ENCODE measurements at regions of chr2 and their contacts with region 1.

Region 1: DNA sequence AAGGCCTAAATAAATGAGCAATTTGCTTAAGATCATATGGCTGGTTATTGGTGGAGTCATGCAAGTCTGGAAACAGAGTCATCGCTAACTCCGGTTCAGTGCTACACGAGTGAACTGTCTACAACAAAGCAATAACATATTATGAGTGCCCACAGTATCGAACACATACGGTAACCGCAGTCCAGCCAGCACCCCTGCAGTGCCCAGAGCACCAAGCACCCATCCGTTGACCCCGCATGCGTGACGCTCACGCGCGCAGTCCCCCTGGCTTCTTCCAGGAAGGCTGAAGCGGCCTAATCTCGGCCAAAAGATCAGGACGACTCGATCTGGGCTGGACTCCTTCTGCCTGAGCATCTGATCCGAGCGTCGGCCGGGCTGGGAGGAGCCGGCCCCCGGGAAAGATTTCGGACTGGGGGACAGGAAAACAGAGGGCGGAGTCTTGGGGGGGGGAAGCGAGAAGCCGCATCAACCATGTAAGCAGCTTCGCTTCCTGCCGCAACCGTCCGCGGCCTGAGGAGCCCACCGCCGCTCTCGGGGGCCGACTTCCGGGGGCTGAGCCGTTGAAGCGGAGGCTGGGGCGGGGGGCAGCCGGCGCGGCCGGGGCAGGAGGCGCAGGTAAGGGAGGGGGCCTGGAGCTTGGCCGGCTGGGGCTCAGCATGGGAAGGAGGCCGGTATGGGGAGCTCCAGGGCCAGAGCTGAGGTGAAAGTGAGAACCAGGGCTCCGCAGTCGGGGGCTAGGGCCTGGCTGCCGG is at the start of gene PIKFYVE:
- DNase-seq: peak; percentile 94
- ATAC-seq: peak; percentile 84
- H3K4me3 Mint-ChIP-seq: peak within 1 kb of the TSS; percentile 84
- H3K27ac Mint-ChIP-seq: peak within 1 kb of the TSS; percentile 94
- H3K4me1 Mint-ChIP-seq: peaks cover 33% of the 10 kb centered on the region
- H3K27me3 Mint-ChIP-seq: no peaks in the 10 kb centered on the region
- total RNA-seq, gene PIKFYVE: 19.3 to 21.5 TPM

Region 2: GRCh38 chr2:206765242-206766056 is 1500.5 kb before region 1 on chr2 and contains the starts of genes FASTKD2 and MDH1B:
- CTCF ChIA-PET with region 1: no interaction called
- POLR2A ChIA-PET with region 1: no interaction called
- intact Hi-C with region 1: loop called in 1 of 2 experiments (anchors 5 kb)
- DNase-seq: peak; percentile 93
- ATAC-seq: peak; percentile 87
- H3K4me3 Mint-ChIP-seq: peak within 1 kb of the TSS; percentile 93
- H3K27ac Mint-ChIP-seq: peak within 1 kb of the TSS; percentile 98
- H3K4me1 Mint-ChIP-seq: peaks cover 37% of the 10 kb centered on the region
- H3K27me3 Mint-ChIP-seq: no peaks in the 10 kb centered on the region
- total RNA-seq, gene FASTKD2: 33.9 to 37.0 TPM
- total RNA-seq, gene MDH1B: 0.83 to 1.3 TPM

Region 3: DNA sequence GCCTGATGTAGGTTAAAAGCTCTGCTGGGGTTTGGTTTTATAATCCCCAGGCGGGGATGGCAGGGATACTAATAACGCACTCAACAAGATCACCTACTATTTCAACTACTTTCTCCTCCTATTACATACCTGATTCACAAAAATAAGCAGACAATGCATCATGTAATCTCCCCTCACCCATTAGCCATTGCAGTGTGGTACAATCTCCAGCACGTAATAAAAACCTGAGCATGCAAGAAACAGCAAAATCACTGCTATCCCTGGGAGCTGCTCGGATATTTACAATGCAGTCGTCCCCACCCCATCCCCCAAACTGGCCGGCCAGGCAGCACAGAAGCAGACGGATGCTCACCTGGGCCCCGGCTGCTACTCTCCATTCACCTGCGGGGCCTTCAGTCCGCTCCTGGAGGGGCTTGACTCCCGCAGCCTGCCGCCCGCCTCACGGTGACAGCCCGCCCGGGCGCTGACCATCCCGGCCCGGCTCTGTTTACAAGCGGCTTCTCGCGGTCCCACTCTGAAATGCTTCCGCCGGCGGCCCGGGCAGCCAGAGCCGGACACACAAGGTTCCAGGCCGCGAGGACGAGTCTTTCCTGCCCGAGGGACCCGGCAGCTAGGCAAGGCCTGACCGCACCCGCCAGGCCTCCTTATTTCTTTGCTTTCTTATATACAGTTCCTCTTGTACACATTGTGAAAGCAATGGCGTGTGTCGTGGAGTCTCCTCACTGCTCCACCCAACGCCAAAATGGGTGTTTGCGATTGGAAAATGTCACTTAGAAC is 240.8 kb before region 1 on chr2 and contains the start of gene PLEKHM3:
- CTCF ChIA-PET with region 1: no interaction called
- POLR2A ChIA-PET with region 1: no interaction called
- intact Hi-C with region 1: loop called in 1 of 2 experiments (anchors 2 kb)
- DNase-seq: peak; percentile 88
- ATAC-seq: peak; percentile 83
- H3K4me3 Mint-ChIP-seq: peak within 1 kb of the TSS; percentile 77
- H3K27ac Mint-ChIP-seq: peak within 1 kb of the TSS; percentile 94
- H3K4me1 Mint-ChIP-seq: peaks cover 12% of the 10 kb centered on the region
- H3K27me3 Mint-ChIP-seq: no peaks in the 10 kb centered on the region
- total RNA-seq, gene PLEKHM3: 4.5 to 5.2 TPM

Region 4: DNA sequence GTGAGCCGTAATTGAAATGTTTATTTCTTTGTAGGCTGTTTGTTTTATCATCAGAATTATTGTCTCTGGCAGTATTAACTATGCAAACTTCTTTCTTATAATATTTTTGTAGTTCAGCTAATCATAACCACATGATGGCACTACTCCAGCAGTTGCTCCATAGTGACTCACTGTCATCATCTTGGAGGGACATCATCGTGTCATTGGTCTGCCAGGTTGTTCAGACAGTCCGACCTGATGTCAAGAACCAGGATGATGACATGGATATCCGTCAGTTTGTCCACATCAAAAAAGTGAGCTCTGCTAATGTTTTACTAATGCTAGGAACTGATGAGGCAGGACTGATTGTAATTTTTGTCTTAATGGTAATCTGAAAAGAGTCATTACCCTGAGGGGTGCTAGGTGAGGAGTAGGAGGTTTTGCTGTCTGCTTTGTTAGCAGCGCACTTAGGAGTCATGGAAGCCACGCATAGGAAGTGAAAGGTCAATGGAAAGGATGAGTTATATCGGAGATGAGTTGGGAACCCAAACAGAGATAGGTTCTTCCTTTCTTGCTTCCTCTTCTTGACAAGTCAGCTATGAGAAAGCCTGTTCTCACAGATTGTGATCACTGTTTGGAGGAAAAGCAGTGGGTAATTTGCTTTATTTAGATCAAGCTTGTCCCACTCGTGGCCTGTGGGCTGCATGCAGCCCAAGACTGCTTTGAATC is 49.3 kb after region 1 on chr2:
- CTCF ChIA-PET with region 1: no interaction called
- POLR2A ChIA-PET with region 1: no interaction called
- intact Hi-C with region 1: loop called in 1 of 2 experiments (anchors 5 kb)
- DNase-seq: no peak
- ATAC-seq: peak; percentile 64
- H3K4me3 Mint-ChIP-seq: no peak overlapping the region
- H3K27ac Mint-ChIP-seq: peak overlapping the region; percentile 44
- H3K4me1 Mint-ChIP-seq: peaks cover 29% of the 10 kb centered on the region
- H3K27me3 Mint-ChIP-seq: no peaks in the 10 kb centered on the region

Region 5: DNA sequence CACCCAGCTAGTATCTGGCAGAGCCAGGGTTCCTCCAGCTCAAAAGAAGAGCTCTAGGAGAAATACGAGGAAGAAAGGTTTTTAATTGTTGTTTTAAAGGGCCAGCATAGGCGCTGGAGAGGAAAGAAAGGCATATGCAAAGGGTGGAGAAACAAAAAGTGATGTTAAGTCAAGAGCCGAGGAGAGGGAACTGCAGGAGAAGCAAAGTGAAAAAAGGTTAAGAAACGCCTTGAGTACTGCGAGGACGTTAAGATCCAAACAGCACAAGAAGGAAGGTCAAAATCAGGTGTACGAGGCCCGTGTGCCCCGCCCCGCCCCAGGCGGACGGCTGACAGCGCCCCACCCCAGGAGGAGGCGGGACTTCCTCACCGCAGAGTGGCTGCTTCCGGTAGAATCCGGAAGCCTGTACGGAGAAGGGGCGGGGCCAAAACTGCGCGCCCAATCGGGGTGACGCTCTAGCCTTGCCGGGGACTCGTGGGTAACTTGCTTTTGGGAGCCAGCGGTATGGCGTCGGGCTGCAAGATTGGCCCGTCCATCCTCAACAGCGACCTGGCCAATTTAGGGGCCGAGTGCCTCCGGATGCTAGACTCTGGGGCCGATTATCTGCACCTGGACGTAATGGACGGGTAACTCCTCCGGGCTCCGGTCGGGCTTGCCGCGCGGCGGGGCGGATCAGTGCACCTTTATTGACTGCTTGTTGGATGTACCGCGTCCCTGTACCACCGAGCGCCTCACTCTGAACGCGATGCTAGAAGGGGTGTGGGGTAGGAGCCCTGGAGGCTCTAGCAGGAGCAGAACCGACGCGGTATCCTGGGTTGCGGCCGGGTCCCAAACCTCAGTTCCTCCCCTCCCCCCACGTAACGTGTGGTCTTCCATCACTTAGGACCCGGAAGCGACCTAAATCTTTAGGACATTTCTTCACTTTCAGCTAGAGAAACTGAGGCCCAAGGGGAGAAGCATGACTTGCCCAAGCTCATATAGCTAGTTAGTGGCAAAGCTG is 1736.5 kb after region 1 on chr2 and contains the start of gene RPE:
- CTCF ChIA-PET with region 1: no interaction called
- POLR2A ChIA-PET with region 1: no interaction called
- intact Hi-C with region 1: loop called in 1 of 2 experiments (anchors 1 kb)
- DNase-seq: peak; percentile 99
- ATAC-seq: peak; percentile 99
- H3K4me3 Mint-ChIP-seq: peak within 1 kb of the TSS; percentile 92
- H3K27ac Mint-ChIP-seq: peak within 1 kb of the TSS; percentile 98
- H3K4me1 Mint-ChIP-seq: peaks cover 53% of the 10 kb centered on the region
- H3K27me3 Mint-ChIP-seq: no peaks in the 10 kb centered on the region
- total RNA-seq, gene RPE: 33.2 to 53.8 TPM